ENCODE measurements at regions of chr1 and their contacts with region 1.

Region 1: GRCh38 chr1:193009501-193009900 is 49.7 kb downstream of the UCHL5 start:
- DNase-seq: no peak
- ATAC-seq: no peak
- H3K4me3 ChIP-seq: no peak overlapping the region
- H3K27ac ChIP-seq: no peak overlapping the region
- H3K4me1 ChIP-seq: peaks cover 35% of the 10 kb centered on the region
- H3K27me3 ChIP-seq: no peaks in the 10 kb centered on the region
- CTCF ChIP-seq: no peak
- EP300 ChIP-seq: no peak
- POLR2A ChIP-seq: no peak
- RAD21 ChIP-seq: no peak

Region 2: GRCh38 chr1:192983349-192983980 is 26.0 kb before region 1 on chr1:
- CTCF ChIA-PET with region 1: no interaction called
- POLR2A ChIA-PET with region 1: no interaction called
- in situ Hi-C with region 1: no loop called
- intact Hi-C with region 1: no loop called
- DNase-seq: no peak
- ATAC-seq: no peak
- H3K4me3 ChIP-seq: no peak overlapping the region
- H3K27ac ChIP-seq: no peak overlapping the region
- H3K4me1 ChIP-seq: no peaks in the 10 kb centered on the region
- H3K27me3 ChIP-seq: no peaks in the 10 kb centered on the region
- CTCF ChIP-seq: no peak
- EP300 ChIP-seq: no peak
- POLR2A ChIP-seq: no peak
- RAD21 ChIP-seq: no peak

Region 3: GRCh38 chr1:193031438-193031837 is 21.9 kb after region 1 on chr1:
- CTCF ChIA-PET with region 1: no interaction called
- POLR2A ChIA-PET with region 1: no interaction called
- in situ Hi-C with region 1: no loop called
- intact Hi-C with region 1: loop called (anchors 2 kb)
- DNase-seq: no peak
- ATAC-seq: peak; percentile 32; the same call in 1 of the 3 replicates
- H3K4me3 ChIP-seq: no peak overlapping the region
- H3K27ac ChIP-seq: no peak overlapping the region
- H3K4me1 ChIP-seq: peaks cover 14% of the 10 kb centered on the region
- H3K27me3 ChIP-seq: no peaks in the 10 kb centered on the region
- CTCF ChIP-seq: peak; percentile 36
- EP300 ChIP-seq: no peak
- POLR2A ChIP-seq: no peak
- RAD21 ChIP-seq: no peak

Region 4: DNA sequence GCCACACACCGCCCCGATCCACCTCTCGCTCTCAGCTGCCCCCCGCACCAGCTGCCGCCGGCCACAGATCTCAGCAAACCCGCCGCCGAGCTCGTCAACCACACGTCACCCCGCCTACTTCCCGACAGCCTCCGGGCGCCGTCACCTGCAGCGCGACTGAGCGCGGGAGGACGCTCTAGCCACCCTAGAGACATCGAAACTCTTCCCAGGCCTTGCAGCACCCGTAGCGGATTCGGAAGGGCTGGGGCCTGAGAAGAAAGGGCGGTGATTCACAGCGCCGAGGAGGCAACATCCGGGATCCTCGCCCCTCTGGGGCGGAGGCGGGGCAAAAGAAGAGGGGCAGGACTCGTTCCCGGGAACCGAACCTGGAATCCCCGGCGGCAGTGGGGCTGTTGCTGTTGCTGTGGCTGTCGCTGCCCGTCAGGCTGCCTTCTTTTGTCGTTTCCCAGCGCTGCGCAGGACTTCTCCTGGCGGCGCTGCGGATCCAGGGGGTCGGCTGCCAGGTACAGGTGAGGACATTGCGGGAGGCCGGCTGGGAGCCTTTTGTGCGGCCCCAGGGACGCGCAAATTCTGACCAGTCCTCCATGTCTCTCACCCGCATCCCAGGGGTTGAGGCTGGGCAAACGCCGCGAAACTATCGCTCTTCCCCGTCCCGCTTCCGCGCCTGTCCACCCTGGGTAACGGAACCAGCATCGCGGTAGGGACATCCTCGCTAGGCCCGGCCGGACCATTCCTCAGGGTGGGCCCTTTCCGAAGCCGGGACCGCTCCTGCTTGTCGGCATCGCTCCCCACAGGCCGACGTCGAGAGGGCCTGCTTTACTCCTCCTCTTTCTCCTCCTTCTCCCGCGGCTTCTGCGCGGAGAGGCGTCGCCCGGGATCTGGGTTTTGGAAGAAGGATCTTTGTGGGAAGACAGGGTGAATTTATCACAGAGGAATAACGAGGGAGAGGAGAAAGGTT is 50.0 kb after region 1 on chr1 and contains the starts of genes RO60 and UCHL5:
- CTCF ChIA-PET with region 1: no interaction called
- POLR2A ChIA-PET with region 1: no interaction called
- in situ Hi-C with region 1: no loop called
- intact Hi-C with region 1: no loop called
- DNase-seq: peak; percentile 97
- ATAC-seq: peak; percentile 96
- H3K4me3 ChIP-seq: peak within 1 kb of the TSS; percentile 92 to 99 (median 94)
- H3K27ac ChIP-seq: peak within 1 kb of the TSS; percentile 94
- H3K4me1 ChIP-seq: peaks cover 44% of the 10 kb centered on the region
- H3K27me3 ChIP-seq: peaks cover 0 to 2% of the 10 kb centered on the region in 2 experiments; a peak in 1 of 5 replicates
- CTCF ChIP-seq: peak; percentile 56
- EP300 ChIP-seq: 0 out of 4 replicates have a peak, but pooled peaks of 1 of the 2 experiments have one; percentile 32
- POLR2A ChIP-seq: peak; percentile 86 to 89
- RAD21 ChIP-seq: peak; percentile 30; the same call in 1 of the 2 replicates
- total RNA-seq, gene RO60: 53.7 and 90.0 TPM in 2 replicates
- total RNA-seq, gene UCHL5: 44.1 and 72.4 TPM in 2 replicates

Region 5: DNA sequence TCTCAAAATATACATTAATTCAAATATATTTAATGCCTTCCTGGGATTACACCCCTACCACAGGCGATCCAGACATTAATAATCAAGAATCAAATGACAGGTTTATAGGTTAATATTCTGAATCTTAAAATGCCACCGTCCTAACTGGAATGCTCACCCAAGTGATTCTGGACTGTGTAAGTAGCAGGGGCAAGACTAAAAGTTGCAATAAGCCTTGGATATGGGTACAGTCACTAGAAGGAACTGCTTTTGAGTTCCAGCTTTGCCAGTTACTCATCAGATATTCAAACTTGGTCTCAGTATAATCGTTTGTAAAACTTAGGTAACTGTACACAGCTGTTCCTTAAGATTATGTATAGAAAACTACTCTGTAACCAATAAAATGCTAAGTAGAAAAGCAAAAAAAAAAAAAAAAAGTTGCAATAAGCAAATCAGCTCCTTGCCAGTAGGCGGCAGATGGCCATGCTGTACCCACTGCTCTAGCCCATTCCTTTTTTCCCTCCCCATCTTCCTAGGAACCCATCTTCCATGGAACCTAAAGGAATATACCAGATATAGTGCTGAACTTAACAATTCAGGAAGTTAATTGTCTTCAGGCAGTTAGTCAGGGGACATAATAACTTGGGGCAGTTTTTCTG is 60.4 kb after region 1 on chr1:
- CTCF ChIA-PET with region 1: no interaction called
- POLR2A ChIA-PET with region 1: no interaction called
- in situ Hi-C with region 1: no loop called
- intact Hi-C with region 1: no loop called
- DNase-seq: no peak
- ATAC-seq: peak; percentile 80
- H3K4me3 ChIP-seq: no peak overlapping the region
- H3K27ac ChIP-seq: no peak overlapping the region
- H3K4me1 ChIP-seq: no peaks in the 10 kb centered on the region
- H3K27me3 ChIP-seq: no peaks in the 10 kb centered on the region
- CTCF ChIP-seq: 0 out of 2 replicates have a peak, but pooled peaks have one; percentile 18
- EP300 ChIP-seq: no peak
- POLR2A ChIP-seq: no peak
- RAD21 ChIP-seq: no peak

Region 6: GRCh38 chr1:193111641-193112090 is 102.2 kb after region 1 on chr1:
- CTCF ChIA-PET with region 1: no interaction called
- POLR2A ChIA-PET with region 1: no interaction called
- in situ Hi-C with region 1: no loop called
- intact Hi-C with region 1: no loop called
- DNase-seq: peak; percentile 67
- ATAC-seq: peak; percentile 53
- H3K4me3 ChIP-seq: peak overlapping the region; percentile 43 to 62 (median 52)
- H3K27ac ChIP-seq: peak overlapping the region; percentile 86
- H3K4me1 ChIP-seq: peaks cover 91% of the 10 kb centered on the region
- H3K27me3 ChIP-seq: no peaks in the 10 kb centered on the region
- CTCF ChIP-seq: no peak
- EP300 ChIP-seq: peak in 1 of 2 experiments; percentile 64; a peak in 3 of 4 replicates
- POLR2A ChIP-seq: no peak
- RAD21 ChIP-seq: no peak

Measured in HepG2 (cell line).